H1 (cell line): ENCODE measurements at regions of chr5 and their contacts with region 1.

Region 1: GRCh38 chr5:16585041-16585667 is 31.6 kb downstream of the RETREG1 start:
- DNase-seq: no peak
- H3K4me3 ChIP-seq: no peak overlapping the region
- H3K27ac ChIP-seq: no peak overlapping the region
- H3K4me1 ChIP-seq: no peaks in the 10 kb centered on the region; a peak in 2 of 7 replicates
- H3K27me3 ChIP-seq: no peaks in the 10 kb centered on the region
- CTCF ChIP-seq: peak; percentile 12 to 63 (median 29); a peak in 3 of 4 replicates
- EP300 ChIP-seq: no peak
- POLR2A ChIP-seq: no peak
- RAD21 ChIP-seq: peak in 1 of 2 experiments; percentile 27; a peak in 2 of 4 replicates

Region 2: DNA sequence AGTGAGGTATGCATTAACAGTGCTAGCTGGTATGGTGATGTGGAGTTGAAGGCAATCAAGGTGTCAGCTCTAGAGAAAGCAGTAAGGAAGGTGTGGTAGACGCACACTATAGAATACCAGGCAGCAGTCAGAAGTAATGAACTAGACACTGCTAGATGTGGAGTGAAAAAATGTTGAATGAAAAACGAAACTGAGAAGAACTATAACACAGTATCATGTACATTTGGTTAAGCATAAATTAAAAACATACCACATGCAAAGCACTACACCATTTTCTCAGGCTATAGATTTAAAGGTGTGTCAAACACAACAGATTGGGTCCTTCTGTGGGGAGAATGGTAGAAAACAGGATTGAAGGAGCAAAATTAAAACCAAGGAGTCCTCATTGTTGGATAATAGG is 135.0 kb before region 1 on chr5:
- CTCF ChIA-PET with region 1: no interaction called
- POLR2A ChIA-PET with region 1: no interaction called
- DNase-seq: no peak
- H3K4me3 ChIP-seq: no peak overlapping the region
- H3K27ac ChIP-seq: no peak overlapping the region
- H3K4me1 ChIP-seq: no peaks in the 10 kb centered on the region
- H3K27me3 ChIP-seq: no peaks in the 10 kb centered on the region
- CTCF ChIP-seq: no peak
- EP300 ChIP-seq: no peak
- POLR2A ChIP-seq: no peak
- RAD21 ChIP-seq: no peak

Region 3: GRCh38 chr5:16603295-16603694 is 18.1 kb after region 1 on chr5:
- CTCF ChIA-PET with region 1: interaction called, 15 read pairs
- POLR2A ChIA-PET with region 1: no interaction called
- DNase-seq: no peak
- H3K4me3 ChIP-seq: no peak overlapping the region
- H3K27ac ChIP-seq: no peak overlapping the region
- H3K4me1 ChIP-seq: no peaks in the 10 kb centered on the region
- H3K27me3 ChIP-seq: no peaks in the 10 kb centered on the region
- CTCF ChIP-seq: no peak
- EP300 ChIP-seq: no peak
- POLR2A ChIP-seq: no peak
- RAD21 ChIP-seq: no peak

Region 4: GRCh38 chr5:16666883-16667398 is 81.8 kb after region 1 on chr5:
- CTCF ChIA-PET with region 1: no interaction called
- POLR2A ChIA-PET with region 1: no interaction called
- DNase-seq: no peak
- H3K4me3 ChIP-seq: no peak overlapping the region
- H3K27ac ChIP-seq: no peak overlapping the region
- H3K4me1 ChIP-seq: no peaks in the 10 kb centered on the region
- H3K27me3 ChIP-seq: no peaks in the 10 kb centered on the region
- CTCF ChIP-seq: peak; percentile 18 to 59 (median 36)
- EP300 ChIP-seq: no peak
- POLR2A ChIP-seq: 0 out of 3 replicates have a peak, but pooled peaks of 1 of the 2 experiments have one; percentile 18
- RAD21 ChIP-seq: peak; percentile 55 to 62